ENCODE measurements at regions of chr2 and their contacts with region 1.

Region 1: DNA sequence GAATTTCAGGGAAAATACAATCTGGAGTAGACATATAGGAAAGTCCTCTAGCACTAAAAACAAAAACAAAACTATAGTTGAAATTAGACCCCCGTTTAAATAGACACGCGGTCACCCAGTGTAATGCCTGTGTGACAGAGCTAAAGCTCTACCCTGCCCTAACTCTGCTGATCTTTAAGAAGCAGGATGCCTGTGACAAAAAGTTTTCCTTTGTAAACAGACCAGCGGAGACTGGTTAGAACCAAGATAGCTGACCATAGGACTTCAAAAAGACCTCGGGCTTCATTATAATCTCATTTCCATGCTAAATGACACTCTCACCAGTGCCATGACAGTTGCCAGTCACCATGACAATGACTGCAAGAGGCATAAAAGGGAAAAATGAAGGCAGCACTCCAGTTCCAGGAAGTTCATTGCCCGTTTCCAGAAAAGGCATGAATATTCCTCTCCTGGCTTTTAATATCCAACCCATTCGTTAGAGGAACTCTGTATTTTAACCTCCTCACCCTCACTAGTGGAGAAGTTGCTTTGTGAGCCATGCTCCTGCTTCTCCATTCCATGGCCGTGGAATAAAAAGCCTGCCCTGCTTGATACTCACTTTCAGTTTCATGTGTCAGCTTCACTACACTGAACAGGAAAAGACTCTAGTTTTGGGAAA is 157.2 kb upstream of the COPS8 start:
- DNase-seq: no peak
- H3K4me3 ChIP-seq: no peak overlapping the region
- H3K27ac ChIP-seq: no peak overlapping the region
- H3K4me1 ChIP-seq: no peaks in the 10 kb centered on the region
- H3K27me3 ChIP-seq: peaks cover 66% of the 10 kb centered on the region
- CTCF ChIP-seq: no peak

Region 2: DNA sequence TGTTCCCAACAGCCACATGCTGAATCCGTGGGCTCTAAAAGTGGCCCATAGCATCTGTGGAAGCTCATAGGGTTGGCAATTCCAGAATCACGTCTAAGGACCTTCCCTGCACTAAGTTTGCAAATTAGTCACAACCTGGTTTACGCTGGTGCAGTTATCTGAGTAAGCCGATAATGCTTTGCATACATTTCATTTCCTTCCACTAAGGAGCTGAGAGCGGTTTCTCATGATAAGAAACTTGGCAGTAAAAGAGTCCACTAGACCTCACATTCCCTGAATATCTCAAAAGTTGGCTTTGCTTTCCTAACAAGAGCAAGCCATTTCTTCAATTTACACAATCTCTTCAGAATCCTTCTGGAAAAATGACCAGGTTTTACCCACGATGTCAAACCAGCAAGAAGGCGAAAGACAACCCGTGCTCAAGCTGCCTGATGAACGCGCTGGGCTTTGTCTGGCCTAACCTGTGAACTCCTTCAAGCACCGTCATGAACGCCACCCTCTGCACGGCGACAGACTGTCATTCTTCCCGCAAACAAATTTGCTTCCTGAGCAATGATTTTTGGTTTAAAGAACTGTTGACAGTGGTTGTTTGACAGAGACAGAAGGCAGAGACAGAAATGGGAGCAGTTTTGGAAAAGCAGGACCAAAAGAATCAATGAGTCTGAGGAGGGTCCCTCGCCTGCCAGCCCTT is 84.2 kb after region 1 on chr2:
- CTCF ChIA-PET with region 1: no interaction called
- POLR2A ChIA-PET with region 1: no interaction called
- intact Hi-C with region 1: loop called (anchors 2 kb)
- DNase-seq: no peak
- H3K4me3 ChIP-seq: no peak overlapping the region
- H3K27ac ChIP-seq: no peak overlapping the region
- H3K4me1 ChIP-seq: no peaks in the 10 kb centered on the region
- H3K27me3 ChIP-seq: peaks cover 47% of the 10 kb centered on the region
- CTCF ChIP-seq: no peak

Measured in A673 (cell line).